ENCODE measurements at regions of chr3 and their contacts with region 1.

Region 1: DNA sequence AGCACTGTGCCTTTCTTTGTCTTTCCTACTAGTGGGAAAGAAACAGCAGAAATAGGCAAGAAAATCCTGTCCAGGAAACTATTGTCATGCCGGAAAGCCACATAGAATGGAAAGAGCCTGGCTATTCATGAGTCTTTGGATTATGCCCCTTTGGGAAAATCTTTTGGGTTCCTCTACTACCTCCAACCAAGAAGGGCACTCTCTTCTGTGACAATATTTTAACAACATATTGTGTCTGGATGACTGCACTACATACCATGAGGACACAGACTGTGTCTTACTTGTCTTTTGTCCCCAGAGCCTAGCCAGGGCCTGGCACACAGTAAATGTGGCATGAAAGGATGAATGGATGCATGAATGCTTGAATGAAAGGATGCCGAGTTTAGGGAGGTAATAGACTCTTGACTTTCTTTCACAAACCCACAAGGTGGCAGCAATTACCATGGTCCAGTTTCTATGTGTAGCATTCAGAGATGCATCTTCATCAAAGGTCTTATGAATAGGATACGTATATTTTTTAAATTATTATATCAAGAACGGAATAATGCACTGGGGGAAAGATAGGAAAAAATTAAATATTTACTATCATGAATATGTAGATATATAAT is 30.3 kb downstream of the ARL14 start:
- DNase-seq: no peak

Region 2: GRCh38 chr3:160931474-160931873 is 224.2 kb after region 1 on chr3:
- intact Hi-C with region 1: loop called in 1 of 2 experiments (anchors 10 kb)
- DNase-seq: no peak

Region 3: GRCh38 chr3:160941885-160942494 is 234.7 kb after region 1 on chr3:
- intact Hi-C with region 1: loop called (anchors 5 to 10 kb)
- DNase-seq: no peak

Measured in posterior vena cava (tissue), 2 donors.